AG04450 (cell line): ENCODE measurements at regions of chr1 and their contacts with region 1.

Region 1: GRCh38 chr1:180101411-180101810 is 53.3 kb upstream of the QSOX1 start:
- DNase-seq: no peak
- H3K4me3 ChIP-seq: no peak overlapping the region
- H3K27ac ChIP-seq: no peak overlapping the region
- H3K27me3 ChIP-seq: no peaks in the 10 kb centered on the region
- CTCF ChIP-seq: no peak

Region 2: GRCh38 chr1:179831852-179832699 is 269.3 kb before region 1 on chr1:
- CTCF ChIA-PET with region 1: no interaction called
- POLR2A ChIA-PET with region 1: no interaction called
- DNase-seq: no peak
- H3K4me3 ChIP-seq: no peak overlapping the region
- H3K27ac ChIP-seq: no peak overlapping the region
- H3K27me3 ChIP-seq: peaks cover 12% of the 10 kb centered on the region
- CTCF ChIP-seq: no peak

Region 3: DNA sequence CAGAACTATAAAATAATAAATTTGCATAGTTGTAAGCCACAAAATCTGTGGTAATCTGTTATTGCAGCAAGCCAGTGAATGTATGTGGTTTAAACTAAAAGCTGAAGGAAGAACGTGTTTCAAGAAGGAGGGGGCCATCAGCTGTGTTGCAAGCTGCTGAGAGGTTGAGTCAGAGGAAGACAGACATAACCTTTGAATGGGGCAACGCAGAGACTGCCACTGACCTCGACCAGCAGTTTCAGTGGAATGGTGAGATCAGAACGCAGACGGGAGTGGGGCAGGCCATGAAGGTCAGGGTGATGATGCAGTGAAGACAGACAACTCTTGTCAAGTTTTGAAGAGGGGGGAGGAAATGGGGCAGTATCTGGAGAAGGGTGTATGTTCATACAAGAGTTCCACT is 30.1 kb after region 1 on chr1:
- CTCF ChIA-PET with region 1: no interaction called
- POLR2A ChIA-PET with region 1: interaction called, 22 read pairs
- DNase-seq: peak; percentile 93
- H3K4me3 ChIP-seq: no peak overlapping the region
- H3K27ac ChIP-seq: peak overlapping the region; percentile 85
- H3K27me3 ChIP-seq: no peaks in the 10 kb centered on the region
- CTCF ChIP-seq: no peak

Region 4: DNA sequence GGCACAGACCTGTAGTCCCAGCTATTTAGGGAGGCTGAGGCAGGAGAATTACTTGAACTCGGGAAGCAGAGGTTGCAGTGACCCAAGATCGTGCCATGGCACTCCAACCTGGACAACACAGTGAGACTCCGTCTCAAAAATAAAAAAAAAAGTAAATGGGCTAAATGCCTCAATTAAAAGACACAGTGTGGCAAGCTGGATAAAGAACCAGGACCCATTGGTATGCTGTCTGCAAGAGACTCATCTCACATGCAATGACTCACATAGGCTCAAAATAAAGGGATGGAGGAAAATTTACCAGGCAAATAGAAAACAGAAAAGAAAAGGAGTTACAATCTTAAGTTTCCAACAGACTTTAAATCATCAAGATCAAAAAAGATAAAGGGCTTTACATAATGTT is 360.7 kb after region 1 on chr1:
- CTCF ChIA-PET with region 1: no interaction called
- POLR2A ChIA-PET with region 1: no interaction called
- DNase-seq: no peak
- H3K4me3 ChIP-seq: no peak overlapping the region
- H3K27ac ChIP-seq: no peak overlapping the region
- H3K27me3 ChIP-seq: no peaks in the 10 kb centered on the region
- CTCF ChIP-seq: no peak